ENCODE measurements at regions of chr2 and their contacts with region 1.

Region 1: GRCh38 chr2:85162746-85163301 is 29.6 kb downstream of the TCF7L1 start:
- DNase-seq: no peak
- H3K4me3 ChIP-seq: no peak overlapping the region
- H3K27ac ChIP-seq: no peak overlapping the region
- H3K4me1 ChIP-seq: peaks cover 15 to 46% (median 29%) of the 10 kb centered on the region in 4 experiments
- H3K27me3 ChIP-seq: no peaks in the 10 kb centered on the region; a peak in 1 of 7 replicates
- CTCF ChIP-seq: no peak
- EP300 ChIP-seq: no peak
- POLR2A ChIP-seq: no peak
- RAD21 ChIP-seq: no peak

Region 2: DNA sequence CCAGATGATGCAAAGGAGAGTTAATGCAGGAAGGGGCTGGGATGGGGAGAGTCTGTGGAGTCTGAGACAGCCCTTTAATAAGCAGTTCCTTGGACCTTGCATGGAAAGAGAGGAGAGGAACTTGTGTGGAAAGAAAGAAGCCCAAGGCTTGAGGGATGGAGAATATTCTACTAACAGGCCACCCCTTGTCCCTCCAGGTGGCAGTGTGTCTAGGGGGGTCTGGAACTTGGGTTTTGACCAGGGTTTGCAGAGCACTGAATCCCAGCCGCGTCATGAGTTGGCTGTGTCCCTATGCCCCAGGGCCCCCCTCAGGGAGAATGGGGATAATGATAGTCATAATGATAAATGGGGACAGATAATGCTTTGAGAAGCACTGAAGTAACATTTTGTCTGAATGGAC is 14.6 kb before region 1 on chr2:
- CTCF ChIA-PET with region 1: interaction called, 57 read pairs
- POLR2A ChIA-PET with region 1: interaction called, 63 read pairs
- DNase-seq: no peak
- H3K4me3 ChIP-seq: no peak overlapping the region
- H3K27ac ChIP-seq: no peak overlapping the region
- H3K4me1 ChIP-seq: peaks cover 0 to 7% (median 4%) of the 10 kb centered on the region in 4 experiments; a peak in 3 of 7 replicates
- H3K27me3 ChIP-seq: no peaks in the 10 kb centered on the region
- CTCF ChIP-seq: peak in 1 of 3 experiments; percentile 23; a peak in 1 of 4 replicates
- EP300 ChIP-seq: no peak
- POLR2A ChIP-seq: no peak
- RAD21 ChIP-seq: peak in 1 of 2 experiments; percentile 20; a peak in 1 of 4 replicates

Region 3: GRCh38 chr2:85175369-85176299 is 12.8 kb after region 1 on chr2:
- CTCF ChIA-PET with region 1: interaction called, 26 read pairs
- POLR2A ChIA-PET with region 1: interaction called, 13 read pairs
- DNase-seq: no peak
- H3K4me3 ChIP-seq: no peak overlapping the region
- H3K27ac ChIP-seq: 0 out of 2 replicates have a peak overlapping the region, but pooled peaks have one; percentile 9
- H3K4me1 ChIP-seq: peaks cover 26 to 45% (median 34%) of the 10 kb centered on the region in 4 experiments
- H3K27me3 ChIP-seq: no peaks in the 10 kb centered on the region
- CTCF ChIP-seq: no peak
- EP300 ChIP-seq: no peak
- POLR2A ChIP-seq: no peak
- RAD21 ChIP-seq: no peak

Region 4: GRCh38 chr2:85282914-85283313 is 120.1 kb after region 1 on chr2:
- CTCF ChIA-PET with region 1: interaction called, 10 read pairs
- POLR2A ChIA-PET with region 1: no interaction called
- DNase-seq: no peak
- H3K4me3 ChIP-seq: no peak overlapping the region
- H3K27ac ChIP-seq: no peak overlapping the region
- H3K4me1 ChIP-seq: peaks cover 1 to 4% (median 2%) of the 10 kb centered on the region in 4 experiments; a peak in 6 of 7 replicates
- H3K27me3 ChIP-seq: no peaks in the 10 kb centered on the region
- CTCF ChIP-seq: no peak
- EP300 ChIP-seq: no peak
- POLR2A ChIP-seq: no peak
- RAD21 ChIP-seq: no peak

Measured in H1 (cell line).